Caco-2 (cell line): ENCODE measurements at regions of chr2 and their contacts with region 1.

Region 1: GRCh38 chr2:67234439-67234838 is 162.7 kb upstream of the ETAA1 start:
- DNase-seq: peak in 1 of 2 experiments; percentile 47
- H3K4me3 ChIP-seq: no peak overlapping the region
- H3K4me3 Mint-ChIP-seq: no peak overlapping the region
- H3K27ac Mint-ChIP-seq: no peak overlapping the region
- H3K4me1 ChIP-seq: no peaks in the 10 kb centered on the region
- H3K4me1 Mint-ChIP-seq: no peaks in the 10 kb centered on the region
- H3K27me3 ChIP-seq: no peaks in the 10 kb centered on the region
- H3K27me3 Mint-ChIP-seq: peaks cover 6% of the 10 kb centered on the region
- CTCF ChIP-seq: peak; percentile 50 to 67

Region 2: GRCh38 chr2:66587216-66587615 is 647.2 kb before region 1 on chr2:
- CTCF ChIA-PET with region 1: no interaction called
- POLR2A ChIA-PET with region 1: no interaction called
- intact Hi-C with region 1: loop called (anchors 1 kb)
- DNase-seq: peak; percentile 55 to 60
- H3K4me3 ChIP-seq: no peak overlapping the region
- H3K4me3 Mint-ChIP-seq: no peak overlapping the region
- H3K27ac Mint-ChIP-seq: no peak overlapping the region
- H3K4me1 ChIP-seq: no peaks in the 10 kb centered on the region
- H3K4me1 Mint-ChIP-seq: no peaks in the 10 kb centered on the region
- H3K27me3 ChIP-seq: no peaks in the 10 kb centered on the region; the same call in 1 of the 2 replicates
- H3K27me3 Mint-ChIP-seq: no peaks in the 10 kb centered on the region
- CTCF ChIP-seq: peak in 1 of 2 experiments; percentile 69

Region 3: DNA sequence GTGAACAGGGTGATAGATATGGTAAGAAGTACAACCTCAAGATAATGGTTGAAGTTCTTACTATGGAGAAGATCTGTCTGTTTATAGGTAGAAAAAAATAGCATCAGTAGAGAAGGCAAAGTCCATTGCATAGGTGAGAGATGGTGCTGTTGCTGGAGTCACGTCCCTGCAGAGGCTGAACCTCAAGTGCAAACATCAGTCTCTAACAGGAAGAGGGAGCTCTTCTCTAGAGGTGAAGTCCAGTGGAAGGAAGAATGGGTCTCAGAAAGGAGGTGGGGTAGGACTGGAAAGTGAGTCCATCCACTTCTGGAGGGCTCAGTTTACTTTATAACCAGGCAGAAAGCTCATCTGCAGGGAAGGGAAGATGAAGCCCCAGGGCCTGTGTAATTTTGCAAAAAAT is 461.8 kb before region 1 on chr2:
- CTCF ChIA-PET with region 1: no interaction called
- POLR2A ChIA-PET with region 1: no interaction called
- intact Hi-C with region 1: loop called (anchors 10 kb)
- DNase-seq: no peak
- H3K4me3 ChIP-seq: no peak overlapping the region
- H3K4me3 Mint-ChIP-seq: no peak overlapping the region
- H3K27ac Mint-ChIP-seq: no peak overlapping the region
- H3K4me1 ChIP-seq: peaks cover 9% of the 10 kb centered on the region; the same call in 1 of the 2 replicates
- H3K4me1 Mint-ChIP-seq: no peaks in the 10 kb centered on the region
- H3K27me3 ChIP-seq: no peaks in the 10 kb centered on the region
- H3K27me3 Mint-ChIP-seq: no peaks in the 10 kb centered on the region
- CTCF ChIP-seq: no peak

Region 4: GRCh38 chr2:66982766-66983165 is 251.7 kb before region 1 on chr2:
- CTCF ChIA-PET with region 1: no interaction called
- POLR2A ChIA-PET with region 1: no interaction called
- intact Hi-C with region 1: loop called (anchors 1 kb)
- DNase-seq: no peak
- H3K4me3 ChIP-seq: no peak overlapping the region
- H3K4me3 Mint-ChIP-seq: no peak overlapping the region
- H3K27ac Mint-ChIP-seq: no peak overlapping the region
- H3K4me1 ChIP-seq: no peaks in the 10 kb centered on the region
- H3K4me1 Mint-ChIP-seq: no peaks in the 10 kb centered on the region
- H3K27me3 ChIP-seq: no peaks in the 10 kb centered on the region
- H3K27me3 Mint-ChIP-seq: no peaks in the 10 kb centered on the region
- CTCF ChIP-seq: no peak